Brain microvascular endothelial cell (primary cell): ENCODE measurements at regions of chr9 and their contacts with region 1.

Region 1: GRCh38 chr9:94178927-94179326 is 80.2 kb upstream of the ZNF169 start:
- DNase-seq: no peak
- H3K4me3 ChIP-seq: no peak overlapping the region
- H3K27ac ChIP-seq: no peak overlapping the region
- H3K27me3 ChIP-seq: no peaks in the 10 kb centered on the region
- CTCF ChIP-seq: no peak

Region 2: GRCh38 chr9:93682232-93682968 is 496.5 kb before region 1 on chr9:
- in situ Hi-C with region 1: loop called (anchors 25 kb)
- DNase-seq: peak; percentile 43
- H3K4me3 ChIP-seq: no peak overlapping the region
- H3K27ac ChIP-seq: no peak overlapping the region
- H3K27me3 ChIP-seq: no peaks in the 10 kb centered on the region
- CTCF ChIP-seq: peak; percentile 87

Region 3: GRCh38 chr9:94084314-94084713 is 94.6 kb before region 1 on chr9 and contains the start of gene PTPDC1:
- in situ Hi-C with region 1: loop called (anchors 25 kb)
- DNase-seq: peak; percentile 70
- H3K4me3 ChIP-seq: peak within 1 kb of the TSS; percentile 35
- H3K27ac ChIP-seq: no peak within 1 kb of the TSS
- H3K27me3 ChIP-seq: no peaks in the 10 kb centered on the region
- CTCF ChIP-seq: no peak